ENCODE measurements at regions of chr14 and their contacts with region 1.

Region 1: DNA sequence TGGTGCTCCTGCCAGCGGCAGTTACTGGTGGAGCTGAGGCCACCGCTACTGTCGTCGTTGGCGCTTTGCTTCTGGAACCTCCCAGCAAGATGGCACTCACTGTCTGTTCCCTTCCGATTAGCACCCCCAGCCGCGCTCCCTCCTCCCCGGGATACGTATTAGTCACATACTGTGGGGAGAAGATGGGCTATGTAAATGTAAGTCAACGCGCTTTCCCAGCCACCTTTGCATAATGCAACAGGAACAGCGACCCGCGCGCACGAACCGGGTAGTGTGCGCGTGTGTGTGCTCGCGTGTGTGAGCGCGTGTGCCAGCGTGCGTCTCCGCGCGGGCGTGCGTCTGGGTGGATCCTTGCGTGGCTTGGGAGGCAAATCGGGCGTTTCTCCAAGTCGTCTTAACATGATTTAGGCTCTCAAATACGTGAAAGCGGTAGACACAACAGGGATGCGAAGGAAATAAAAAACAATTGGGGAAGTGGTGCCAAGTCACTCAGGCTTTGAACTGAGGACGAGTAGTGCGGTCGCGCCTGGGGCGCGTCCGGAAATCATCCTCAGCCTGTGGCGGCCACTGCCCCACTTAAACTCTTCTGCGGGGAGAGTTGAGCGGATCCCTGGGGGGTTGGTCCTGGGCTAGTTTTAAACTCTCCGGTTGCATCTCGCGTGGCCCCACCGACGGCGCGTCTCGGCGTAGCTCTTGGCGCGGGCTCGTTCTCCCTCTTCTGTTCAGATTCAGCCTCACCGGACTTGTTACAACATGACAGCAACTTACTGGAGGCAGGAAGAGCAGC is 1.8 kb downstream of the FLRT2 start:
- DNase-seq: peak; percentile 26
- H3K4me3 ChIP-seq: peak overlapping the region; percentile 42 to 49
- H3K27ac ChIP-seq: peak overlapping the region; percentile 59 to 62
- H3K4me1 ChIP-seq: no peaks in the 10 kb centered on the region
- H3K27me3 ChIP-seq: peaks cover 17% of the 10 kb centered on the region
- CTCF ChIP-seq: peak in 2 of 4 experiments; percentile 20 to 35
- POLR2A ChIP-seq: no peak

Region 2: DNA sequence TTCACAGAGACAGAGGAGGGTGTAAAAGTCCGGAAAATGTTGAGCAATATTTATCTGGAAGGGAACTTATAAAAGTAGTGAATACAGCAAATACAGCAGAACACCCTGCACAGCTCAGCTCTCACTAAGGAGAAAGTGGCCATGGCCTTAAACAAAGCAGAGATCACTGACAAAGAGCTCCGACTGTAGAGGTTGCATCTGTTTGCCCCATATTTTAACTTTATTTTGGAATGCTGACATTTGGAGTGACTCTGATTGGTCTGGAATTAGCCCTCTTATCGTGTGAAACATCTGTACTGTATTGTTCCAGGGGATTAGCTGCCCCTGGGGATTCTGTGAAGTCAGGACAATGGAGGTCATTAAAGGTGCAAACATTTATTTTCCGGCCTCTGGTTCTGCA is 1277.5 kb before region 1 on chr14:
- intact Hi-C with region 1: loop called (anchors 10 kb)
- DNase-seq: peak; percentile 66
- H3K4me3 ChIP-seq: no peak overlapping the region
- H3K27ac ChIP-seq: peak overlapping the region; percentile 17 to 29
- H3K4me1 ChIP-seq: no peaks in the 10 kb centered on the region
- H3K27me3 ChIP-seq: no peaks in the 10 kb centered on the region
- CTCF ChIP-seq: no peak
- POLR2A ChIP-seq: no peak

Region 3: GRCh38 chr14:85146779-85147178 is 385.0 kb before region 1 on chr14:
- intact Hi-C with region 1: no loop called
- DNase-seq: no peak
- H3K4me3 ChIP-seq: no peak overlapping the region
- H3K27ac ChIP-seq: no peak overlapping the region
- H3K4me1 ChIP-seq: no peaks in the 10 kb centered on the region
- H3K27me3 ChIP-seq: no peaks in the 10 kb centered on the region
- CTCF ChIP-seq: no peak
- POLR2A ChIP-seq: no peak

Region 4: GRCh38 chr14:86057018-86057667 is 525.4 kb after region 1 on chr14:
- intact Hi-C with region 1: loop called (anchors 10 kb)
- DNase-seq: no peak
- H3K4me3 ChIP-seq: no peak overlapping the region
- H3K27ac ChIP-seq: no peak overlapping the region
- H3K4me1 ChIP-seq: no peaks in the 10 kb centered on the region
- H3K27me3 ChIP-seq: no peaks in the 10 kb centered on the region
- CTCF ChIP-seq: peak; percentile 48 to 54 (median 51)
- POLR2A ChIP-seq: no peak

Measured in prostate gland (tissue), 2 donors.